Naive thymus-derived CD8-positive, alpha-beta T cell (primary cell): ENCODE measurements at regions of chr6 and their contacts with region 1.

Region 1: DNA sequence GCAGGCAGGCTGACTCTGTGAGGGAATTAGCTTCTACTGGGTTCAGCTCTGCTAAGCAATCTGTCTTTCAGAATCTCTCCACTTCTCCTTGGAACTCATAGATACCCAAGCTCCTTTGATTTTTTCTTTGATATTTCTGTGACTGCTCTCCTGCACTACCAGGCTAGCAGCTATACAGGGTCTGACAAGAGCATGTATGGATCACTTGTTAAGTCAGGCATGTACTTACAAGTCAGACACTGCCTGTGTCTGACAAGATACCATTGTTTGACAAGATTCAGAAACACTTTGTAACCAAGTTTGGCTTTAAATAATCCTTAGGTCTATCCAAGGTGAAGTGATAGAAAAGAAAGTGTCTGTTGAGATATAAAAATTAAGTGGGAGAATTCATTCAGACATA is 79.5 kb downstream of the SESN1 start:
- DNase-seq: no peak
- ATAC-seq: peak in 1 of 2 donors; percentile 26
- H3K4me3 Mint-ChIP-seq: peak overlapping the region in 4 of 10 donors; percentile 11 to 43 (median 28)
- H3K27ac Mint-ChIP-seq: peak overlapping the region in 9 of 10 donors; percentile 17 to 93 (median 83)
- H3K4me1 Mint-ChIP-seq: peaks cover 26 to 67% (median 53%) of the 10 kb centered on the region in 4 donors
- H3K27me3 Mint-ChIP-seq: no peaks in the 10 kb centered on the region

Region 2: DNA sequence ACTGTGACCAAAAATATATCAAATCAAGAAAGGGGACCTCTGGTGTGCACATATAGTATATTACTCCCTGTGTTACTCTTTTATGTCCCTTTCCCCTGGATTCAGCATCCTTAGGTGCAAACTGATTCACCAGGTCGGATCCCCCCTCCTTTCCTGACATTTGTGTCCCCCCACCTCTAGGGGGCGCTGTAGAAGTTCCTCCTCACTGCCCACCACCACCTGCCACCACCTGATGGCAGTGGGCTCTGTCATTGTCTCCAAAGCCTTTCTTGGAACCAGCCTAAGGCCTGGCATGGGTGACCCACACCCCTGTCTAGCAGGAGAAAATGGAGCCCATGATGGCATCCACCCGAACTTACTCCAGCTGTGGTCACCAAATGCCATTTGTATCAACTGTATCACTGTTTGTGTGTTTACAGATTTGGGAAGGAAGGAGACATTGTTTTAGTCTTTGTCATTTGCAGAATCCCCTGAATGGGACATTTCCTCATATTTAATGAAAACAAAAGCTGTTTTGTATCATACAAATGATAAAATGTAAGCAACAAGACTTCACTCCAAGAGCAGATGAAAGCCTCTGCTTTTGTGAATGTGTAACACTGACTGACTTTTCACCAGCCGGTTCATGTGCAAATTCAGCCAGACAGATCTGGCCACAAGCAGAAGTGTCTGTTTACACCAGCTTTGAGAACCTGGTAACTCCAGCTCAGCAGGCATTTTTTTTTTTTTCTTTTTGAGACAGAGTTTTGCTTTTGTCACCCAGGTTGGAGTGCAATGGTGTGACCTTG is 100.7 kb before region 1 on chr6:
- POLR2A ChIA-PET with region 1: no interaction called
- DNase-seq: peak; percentile 5 to 68 (median 34)
- ATAC-seq: peak; percentile 37 to 40
- H3K4me3 Mint-ChIP-seq: no peak overlapping the region
- H3K27ac Mint-ChIP-seq: peak overlapping the region in 2 of 10 donors; percentile 74 to 85
- H3K4me1 Mint-ChIP-seq: peaks cover 0 to 20% (median 4%) of the 10 kb centered on the region in 4 donors
- H3K27me3 Mint-ChIP-seq: no peaks in the 10 kb centered on the region

Region 3: GRCh38 chr6:109095027-109095834 is 80.1 kb after region 1 on chr6 and contains the start of gene CEP57L1:
- POLR2A ChIA-PET with region 1: interaction called, 18 read pairs
- DNase-seq: peak; percentile 88 to 97 (median 94)
- ATAC-seq: peak; percentile 75 to 76
- H3K4me3 Mint-ChIP-seq: peak within 1 kb of the TSS; percentile 88 to 98 (median 94)
- H3K27ac Mint-ChIP-seq: peak within 1 kb of the TSS; percentile 97 to 100 (median 99)
- H3K4me1 Mint-ChIP-seq: peaks cover 24 to 56% (median 51%) of the 10 kb centered on the region in 4 donors
- H3K27me3 Mint-ChIP-seq: no peaks in the 10 kb centered on the region
- polyA plus RNA-seq, gene CEP57L1: 5.4 to 9.5 (median 6.2) TPM

Region 4: DNA sequence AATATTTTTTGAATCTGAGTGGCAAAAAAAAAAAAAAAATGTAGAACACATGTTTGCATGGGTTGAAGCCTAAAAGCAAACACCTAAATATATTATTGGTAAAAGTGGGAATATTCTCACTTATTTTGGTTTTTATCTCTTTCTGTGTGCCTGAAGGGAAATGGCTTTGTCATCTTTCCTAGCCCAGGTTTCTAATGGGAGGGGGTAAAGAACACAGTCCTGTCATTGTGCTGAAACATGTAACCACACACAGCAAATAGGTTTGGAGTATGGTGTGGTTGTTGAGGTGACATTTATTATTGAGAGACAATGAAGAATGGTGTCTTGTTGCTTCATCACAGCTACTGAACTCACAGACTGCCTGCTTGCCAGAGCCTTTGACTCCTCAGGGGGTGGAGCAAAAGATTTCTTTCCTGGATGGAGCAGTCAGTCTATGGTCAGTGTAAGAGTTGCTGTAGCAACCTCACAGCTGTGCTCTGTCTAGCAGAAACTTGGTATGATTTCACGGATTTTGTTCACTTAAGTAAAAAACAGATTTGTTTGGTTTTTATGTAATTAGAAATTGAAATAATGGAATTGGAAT is 150.3 kb after region 1 on chr6:
- POLR2A ChIA-PET with region 1: no interaction called
- DNase-seq: no peak
- ATAC-seq: no peak
- H3K4me3 Mint-ChIP-seq: no peak overlapping the region
- H3K27ac Mint-ChIP-seq: no peak overlapping the region
- H3K4me1 Mint-ChIP-seq: no peaks in the 10 kb centered on the region
- H3K27me3 Mint-ChIP-seq: no peaks in the 10 kb centered on the region